Activated CD4-positive, alpha-beta T cell treated with anti-CD3 and anti-CD28 coated beads, Interleukin-2, amount 10 ng/mL, durations not matched to agents 24 days and 14 days (primary cell): ENCODE measurements at regions of chr9 and their contacts with region 1.

Region 1: GRCh38 chr9:96217754-96218693 is 84.0 kb downstream of the HSD17B3 start:
- DNase-seq: peak; percentile 94
- H3K4me3 Mint-ChIP-seq: peak overlapping the region; percentile 83
- H3K27ac Mint-ChIP-seq: peak overlapping the region; percentile 53
- H3K4me1 Mint-ChIP-seq: peaks cover 8% of the 10 kb centered on the region
- H3K27me3 Mint-ChIP-seq: peaks cover 51% of the 10 kb centered on the region

Region 2: DNA sequence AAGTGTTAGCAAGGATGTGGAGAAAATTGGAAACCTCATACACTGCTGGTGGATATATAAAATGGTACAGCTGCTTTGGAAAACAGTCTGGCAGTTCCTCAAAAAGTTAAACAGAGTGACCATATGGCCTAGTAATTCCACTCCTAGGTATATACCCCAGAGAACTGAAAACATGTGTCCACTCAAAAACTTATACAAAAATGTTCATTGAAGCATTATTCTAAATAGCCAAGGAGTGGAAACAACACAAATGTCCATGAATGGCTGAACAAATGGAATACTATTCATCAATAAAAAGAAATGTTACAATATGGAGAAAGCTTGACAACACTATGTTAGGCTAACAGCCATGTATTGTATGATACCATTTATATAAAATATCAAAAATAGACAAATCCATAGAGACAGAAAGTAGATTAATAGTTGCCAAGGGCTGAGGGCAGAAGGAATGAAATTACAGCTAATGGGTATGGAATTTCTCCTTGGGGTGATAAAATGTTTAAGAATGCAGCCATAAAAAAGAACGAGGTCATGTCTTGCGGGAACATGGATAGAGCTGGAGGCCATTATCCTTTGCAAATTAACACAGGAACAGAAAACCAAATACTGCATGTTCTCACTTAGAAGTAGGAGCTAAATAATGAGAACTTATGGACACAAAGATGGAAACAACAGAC is 1545.1 kb before region 1 on chr9:
- intact Hi-C with region 1: loop called (anchors 2 kb)
- DNase-seq: no peak
- H3K4me3 Mint-ChIP-seq: no peak overlapping the region
- H3K27ac Mint-ChIP-seq: no peak overlapping the region
- H3K4me1 Mint-ChIP-seq: peaks cover 8% of the 10 kb centered on the region
- H3K27me3 Mint-ChIP-seq: peaks cover 23% of the 10 kb centered on the region

Region 3: DNA sequence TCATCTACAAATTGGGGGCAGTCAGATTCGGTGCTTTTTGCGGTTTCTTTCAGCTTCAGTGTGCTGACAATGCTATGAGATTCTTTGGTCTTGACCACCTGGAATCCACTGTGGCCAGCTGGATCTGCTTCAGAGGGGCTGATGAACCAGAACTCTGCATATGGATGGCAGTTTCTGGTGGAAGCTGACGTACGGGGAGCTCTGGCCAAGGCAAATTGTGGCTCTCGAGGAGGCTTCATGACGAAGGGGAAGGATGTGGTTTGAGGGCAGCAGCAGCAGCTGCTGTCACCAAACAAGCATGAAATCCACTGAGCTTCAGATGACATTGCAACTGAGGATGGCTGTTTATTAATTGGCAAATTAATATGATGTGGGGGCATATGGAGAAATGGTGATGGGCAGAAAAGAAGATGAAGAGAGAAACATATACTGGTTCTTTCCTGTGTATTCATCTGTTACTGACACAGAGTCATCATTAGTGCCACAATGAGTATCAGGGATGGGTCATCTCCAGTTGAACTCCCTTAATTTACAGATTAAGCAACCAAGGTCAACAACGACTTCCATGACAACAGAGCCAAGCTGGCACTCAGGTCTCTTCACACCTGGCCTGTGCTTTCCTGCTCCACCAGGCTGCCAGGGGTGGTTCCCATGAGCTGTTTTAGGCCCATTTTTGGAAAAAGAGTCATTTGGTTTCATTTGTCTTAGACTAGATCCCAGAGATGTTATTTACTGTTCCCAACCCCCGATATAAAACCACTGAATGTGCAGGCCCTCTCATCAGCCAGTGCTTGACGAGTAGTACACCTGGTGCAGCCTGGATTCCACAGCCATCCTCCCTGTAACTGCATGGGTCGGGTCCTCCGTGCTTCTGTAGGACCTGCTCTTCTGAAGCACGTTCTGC is 1356.8 kb before region 1 on chr9:
- intact Hi-C with region 1: loop called (anchors 5 kb)
- DNase-seq: peak; percentile 93
- H3K4me3 Mint-ChIP-seq: peak overlapping the region; percentile 74
- H3K27ac Mint-ChIP-seq: peak overlapping the region; percentile 86
- H3K4me1 Mint-ChIP-seq: peaks cover 48% of the 10 kb centered on the region
- H3K27me3 Mint-ChIP-seq: peaks cover 3% of the 10 kb centered on the region

Region 4: DNA sequence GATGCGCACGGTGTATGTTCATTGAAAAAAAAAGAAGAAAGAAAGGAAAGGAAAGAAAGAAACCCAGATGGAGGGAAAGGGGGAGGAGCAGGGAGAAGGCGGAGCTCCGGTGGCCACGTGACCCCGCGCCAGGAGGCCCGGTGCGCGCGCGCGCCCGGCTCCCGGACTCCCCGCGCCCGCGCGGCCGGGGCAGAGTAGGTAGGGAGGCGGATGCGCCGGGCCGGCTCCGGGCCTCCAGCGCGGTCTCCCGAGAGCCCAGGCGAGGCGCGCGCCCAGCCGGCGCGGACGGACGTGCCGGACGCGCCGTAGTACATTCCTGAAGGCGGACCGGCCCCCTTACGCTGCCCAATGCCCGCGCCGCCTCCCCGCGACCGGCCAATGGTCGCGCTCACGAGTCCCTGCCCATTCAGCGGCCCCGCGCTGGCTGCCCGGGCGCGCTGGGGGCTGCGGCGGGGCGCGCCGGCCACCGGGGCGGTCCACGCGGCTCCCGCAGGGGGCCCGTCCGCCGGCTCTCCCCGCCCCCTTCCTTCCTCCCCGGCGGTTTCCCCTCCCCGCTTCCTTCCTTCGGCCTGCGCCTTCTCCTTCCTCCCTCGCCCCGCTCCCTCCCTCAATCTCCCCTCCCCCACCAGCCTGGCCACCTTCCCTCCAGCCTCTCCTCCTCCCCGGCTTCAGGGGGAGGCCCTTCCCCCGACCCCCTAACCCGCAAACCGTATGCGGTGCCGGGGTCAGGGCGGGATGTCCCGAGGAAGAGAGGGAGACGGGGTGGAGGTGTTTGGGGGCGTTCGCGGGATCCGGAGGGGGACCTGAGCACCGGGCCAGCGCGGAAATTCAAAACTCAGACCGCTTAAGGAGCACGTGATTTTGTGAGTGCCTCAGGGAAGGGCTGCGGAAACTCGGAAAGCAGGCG is 707.1 kb before region 1 on chr9:
- intact Hi-C with region 1: loop called (anchors 5 kb)
- DNase-seq: peak; percentile 96
- H3K4me3 Mint-ChIP-seq: peak overlapping the region; percentile 86
- H3K27ac Mint-ChIP-seq: peak overlapping the region; percentile 86
- H3K4me1 Mint-ChIP-seq: peaks cover 29% of the 10 kb centered on the region
- H3K27me3 Mint-ChIP-seq: peaks cover 62% of the 10 kb centered on the region

Region 5: DNA sequence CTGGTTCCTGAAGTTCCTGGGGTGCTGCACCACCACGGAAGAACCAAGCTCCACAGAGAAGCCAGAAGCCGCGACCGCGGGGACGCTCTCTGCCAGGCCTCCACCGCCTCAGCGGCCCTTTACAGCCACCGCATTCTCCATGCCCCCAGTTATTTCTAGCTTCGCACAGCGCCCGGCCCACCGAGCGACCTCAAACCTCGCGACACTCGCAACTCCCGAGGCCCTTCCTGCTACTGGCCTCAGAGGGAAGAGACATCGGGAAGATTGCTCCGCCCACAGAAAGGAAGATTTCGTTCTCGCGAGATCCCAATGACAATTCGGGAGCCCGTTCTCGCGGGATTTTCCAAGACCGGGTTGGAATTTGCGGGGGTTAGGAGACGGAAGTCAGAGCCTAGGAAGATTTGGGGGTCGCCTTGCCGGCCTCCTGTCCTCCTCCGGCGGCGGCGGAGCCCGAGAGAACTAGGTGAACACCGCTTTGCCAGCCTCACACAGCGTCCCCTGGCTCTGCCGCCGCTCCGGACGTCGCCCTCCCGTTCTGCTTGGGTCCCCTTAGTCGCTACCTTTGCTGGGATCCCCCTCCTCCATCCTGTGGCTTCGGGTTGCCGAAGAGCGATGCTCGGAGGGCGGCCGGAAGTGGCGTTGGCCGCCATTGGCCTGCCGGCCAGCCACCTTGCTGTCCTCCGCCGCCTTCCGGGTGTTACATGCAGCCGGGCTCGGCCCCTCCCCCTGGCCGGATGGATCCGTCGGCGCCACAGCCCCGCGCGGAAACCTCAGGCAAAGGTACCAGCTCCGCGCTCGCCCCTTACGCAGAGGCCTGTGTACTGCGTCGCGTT is 342.5 kb before region 1 on chr9 and contains the start of gene ERCC6L2:
- intact Hi-C with region 1: loop called (anchors 10 kb)
- DNase-seq: peak; percentile 98
- H3K4me3 Mint-ChIP-seq: no peak within 1 kb of the TSS
- H3K27ac Mint-ChIP-seq: no peak within 1 kb of the TSS
- H3K4me1 Mint-ChIP-seq: peaks cover 37% of the 10 kb centered on the region
- H3K27me3 Mint-ChIP-seq: no peaks in the 10 kb centered on the region
- total RNA-seq, gene ERCC6L2: 32.1 and 35.7 TPM in 2 replicates

Region 6: DNA sequence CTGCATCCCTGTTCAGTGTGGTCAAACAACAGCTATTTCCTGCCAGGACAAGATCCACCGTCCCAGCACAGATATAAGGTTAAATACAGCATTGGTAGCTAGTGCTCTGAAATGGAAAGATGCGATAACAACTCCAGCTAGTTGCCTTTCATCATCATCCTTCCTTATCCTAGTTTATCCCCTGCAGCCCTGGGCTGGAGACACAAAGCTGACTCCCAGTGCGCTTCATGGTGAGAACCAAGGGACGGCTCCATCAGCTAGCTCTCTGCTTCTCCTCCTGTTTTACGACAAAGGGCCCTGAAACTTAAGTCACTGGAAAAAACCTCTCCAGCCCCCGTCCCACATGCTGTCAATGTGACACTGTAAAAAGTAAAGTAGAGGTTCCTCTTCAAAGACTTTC is 363.8 kb after region 1 on chr9:
- intact Hi-C with region 1: no loop called
- DNase-seq: no peak
- H3K4me3 Mint-ChIP-seq: no peak overlapping the region
- H3K27ac Mint-ChIP-seq: no peak overlapping the region
- H3K4me1 Mint-ChIP-seq: no peaks in the 10 kb centered on the region
- H3K27me3 Mint-ChIP-seq: peaks cover 8% of the 10 kb centered on the region